Ovary (tissue), 10 donors: ENCODE measurements at regions of chr2 and their contacts with region 1.

Region 1: GRCh38 chr2:168346725-168347477 is 99.5 kb upstream of the STK39 start:
- DNase-seq: peak; percentile 64 to 73 (median 71)
- H3K4me3 ChIP-seq: peak overlapping the region; percentile 41
- H3K27ac ChIP-seq: no peak overlapping the region
- H3K4me1 ChIP-seq: no peaks in the 10 kb centered on the region
- H3K27me3 ChIP-seq: no peaks in the 10 kb centered on the region
- CTCF ChIP-seq: peak; percentile 56 to 83 (median 78)
- EP300 ChIP-seq: no peak
- POLR2A ChIP-seq: no peak

Region 2: GRCh38 chr2:168705534-168706470 is 358.9 kb after region 1 on chr2:
- intact Hi-C with region 1: loop called in 1 of 4 experiments (anchors 5 kb)
- DNase-seq: no peak
- H3K4me3 ChIP-seq: no peak overlapping the region
- H3K27ac ChIP-seq: no peak overlapping the region
- H3K4me1 ChIP-seq: peaks cover 2% of the 10 kb centered on the region
- H3K27me3 ChIP-seq: no peaks in the 10 kb centered on the region
- CTCF ChIP-seq: peak in 1 of 3 donors; percentile 25
- EP300 ChIP-seq: no peak
- POLR2A ChIP-seq: no peak

Region 3: GRCh38 chr2:168758970-168759820 is 412.3 kb after region 1 on chr2:
- intact Hi-C with region 1: loop called (anchors 5 kb)
- DNase-seq: peak in 3 of 5 donors; percentile 20 to 29 (median 28)
- H3K4me3 ChIP-seq: no peak overlapping the region
- H3K27ac ChIP-seq: no peak overlapping the region
- H3K4me1 ChIP-seq: no peaks in the 10 kb centered on the region
- H3K27me3 ChIP-seq: no peaks in the 10 kb centered on the region
- CTCF ChIP-seq: peak in 2 of 3 donors; percentile 36 to 60
- EP300 ChIP-seq: no peak
- POLR2A ChIP-seq: no peak

Region 4: GRCh38 chr2:168912901-168913369 is 566.0 kb after region 1 on chr2:
- intact Hi-C with region 1: loop called in 2 of 4 experiments (anchors 10 kb)
- DNase-seq: peak; percentile 27 to 78 (median 53)
- H3K4me3 ChIP-seq: no peak overlapping the region
- H3K27ac ChIP-seq: no peak overlapping the region
- H3K4me1 ChIP-seq: peaks cover 2% of the 10 kb centered on the region
- H3K27me3 ChIP-seq: no peaks in the 10 kb centered on the region
- CTCF ChIP-seq: no peak
- EP300 ChIP-seq: no peak
- POLR2A ChIP-seq: no peak